CD4-positive, alpha-beta memory T cell (primary cell): ENCODE measurements at regions of chr12 and their contacts with region 1.

Region 1: DNA sequence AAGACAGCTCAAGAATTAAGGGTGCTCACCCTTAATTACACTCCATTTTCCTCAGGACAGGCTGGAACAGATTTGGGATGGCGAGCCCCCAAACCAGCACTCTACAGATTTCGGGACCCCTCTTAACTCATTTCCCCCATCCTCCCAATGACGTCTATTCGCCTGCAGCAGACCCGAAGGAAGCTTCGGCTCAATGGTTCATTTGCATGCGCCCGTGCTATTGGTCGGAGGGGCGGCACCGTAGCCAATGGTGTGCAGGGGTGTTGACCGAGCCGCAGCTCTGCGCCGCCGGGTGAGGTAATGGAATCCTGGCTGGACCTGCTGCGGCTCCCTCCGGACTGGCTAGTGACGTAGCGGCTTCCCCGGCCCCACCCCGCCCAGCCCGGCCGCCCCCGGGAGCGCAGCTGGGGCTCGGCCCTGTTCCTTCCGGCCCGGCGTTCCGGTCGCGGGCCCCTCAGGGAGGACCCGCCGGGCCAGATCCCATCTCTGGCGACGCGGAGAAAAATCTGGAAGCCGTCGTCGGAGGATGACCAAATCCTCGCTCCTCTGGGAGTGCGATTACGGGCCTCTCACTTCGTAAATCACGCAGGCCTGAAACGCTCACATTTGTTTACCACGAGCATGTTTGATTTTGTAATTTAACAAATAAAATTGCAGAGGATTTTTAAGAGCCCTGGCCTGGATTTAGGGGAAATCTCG is 18.3 kb upstream of the NR4A1 start:
- DNase-seq: peak; percentile 81 to 95 (median 85)
- H3K4me3 ChIP-seq: peak overlapping the region; percentile 3 to 36
- H3K4me3 Mint-ChIP-seq: peak overlapping the region; percentile 68 to 87 (median 82)
- H3K27ac ChIP-seq: peak overlapping the region; percentile 54
- H3K27ac Mint-ChIP-seq: peak overlapping the region; percentile 86 to 98 (median 96)
- H3K4me1 ChIP-seq: peaks cover 31% of the 10 kb centered on the region
- H3K4me1 Mint-ChIP-seq: peaks cover 13 to 44% (median 26%) of the 10 kb centered on the region in 4 donors
- H3K27me3 ChIP-seq: no peaks in the 10 kb centered on the region
- H3K27me3 Mint-ChIP-seq: no peaks in the 10 kb centered on the region

Region 2: DNA sequence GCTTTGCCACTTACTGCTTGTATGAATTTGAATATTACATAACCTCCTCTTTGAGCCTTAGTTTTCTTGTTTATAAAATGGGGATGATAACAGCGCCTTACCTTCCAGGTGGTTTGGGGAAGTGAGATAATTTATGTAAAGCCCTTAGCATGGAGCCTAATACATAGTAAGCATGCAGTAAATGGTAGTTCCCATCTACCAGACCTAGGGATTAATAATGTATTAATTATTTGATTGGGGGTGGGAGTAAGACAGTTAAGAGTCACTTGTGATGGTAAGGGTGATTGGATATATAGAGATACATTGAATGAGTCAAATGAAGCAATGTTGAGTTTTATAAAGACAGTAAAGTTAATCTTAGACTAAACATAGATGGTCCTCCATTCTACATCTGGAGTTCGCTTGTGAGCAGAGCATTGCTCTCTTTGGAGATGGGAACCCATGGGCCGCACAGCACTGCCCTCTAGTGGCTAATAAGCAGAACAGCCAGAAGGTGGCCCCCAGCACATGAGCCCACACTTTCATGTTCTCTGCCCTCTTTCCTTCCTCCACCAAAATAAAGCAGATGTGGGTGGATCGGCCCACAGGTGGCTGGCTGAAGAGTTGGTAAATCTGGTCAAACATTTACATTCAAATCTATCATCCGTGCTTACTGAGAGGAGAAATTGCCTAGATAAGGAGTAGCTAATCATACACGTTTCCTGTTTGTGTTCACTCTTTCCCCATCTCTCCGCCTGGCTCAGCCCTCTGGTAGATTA is 52.7 kb before region 1 on chr12:
- CTCF ChIA-PET with region 1: interaction called, 1,048 read pairs
- POLR2A ChIA-PET with region 1: no interaction called
- intact Hi-C with region 1: no loop called
- DNase-seq: peak; percentile 63 to 72 (median 67)
- H3K4me3 ChIP-seq: no peak overlapping the region
- H3K4me3 Mint-ChIP-seq: peak overlapping the region in 1 of 8 donors; percentile 44
- H3K27ac ChIP-seq: no peak overlapping the region
- H3K27ac Mint-ChIP-seq: peak overlapping the region in 6 of 7 donors; percentile 10 to 75 (median 42)
- H3K4me1 ChIP-seq: peaks cover 17% of the 10 kb centered on the region
- H3K4me1 Mint-ChIP-seq: peaks cover 19 to 35% (median 26%) of the 10 kb centered on the region in 4 donors
- H3K27me3 ChIP-seq: no peaks in the 10 kb centered on the region
- H3K27me3 Mint-ChIP-seq: no peaks in the 10 kb centered on the region

Region 3: DNA sequence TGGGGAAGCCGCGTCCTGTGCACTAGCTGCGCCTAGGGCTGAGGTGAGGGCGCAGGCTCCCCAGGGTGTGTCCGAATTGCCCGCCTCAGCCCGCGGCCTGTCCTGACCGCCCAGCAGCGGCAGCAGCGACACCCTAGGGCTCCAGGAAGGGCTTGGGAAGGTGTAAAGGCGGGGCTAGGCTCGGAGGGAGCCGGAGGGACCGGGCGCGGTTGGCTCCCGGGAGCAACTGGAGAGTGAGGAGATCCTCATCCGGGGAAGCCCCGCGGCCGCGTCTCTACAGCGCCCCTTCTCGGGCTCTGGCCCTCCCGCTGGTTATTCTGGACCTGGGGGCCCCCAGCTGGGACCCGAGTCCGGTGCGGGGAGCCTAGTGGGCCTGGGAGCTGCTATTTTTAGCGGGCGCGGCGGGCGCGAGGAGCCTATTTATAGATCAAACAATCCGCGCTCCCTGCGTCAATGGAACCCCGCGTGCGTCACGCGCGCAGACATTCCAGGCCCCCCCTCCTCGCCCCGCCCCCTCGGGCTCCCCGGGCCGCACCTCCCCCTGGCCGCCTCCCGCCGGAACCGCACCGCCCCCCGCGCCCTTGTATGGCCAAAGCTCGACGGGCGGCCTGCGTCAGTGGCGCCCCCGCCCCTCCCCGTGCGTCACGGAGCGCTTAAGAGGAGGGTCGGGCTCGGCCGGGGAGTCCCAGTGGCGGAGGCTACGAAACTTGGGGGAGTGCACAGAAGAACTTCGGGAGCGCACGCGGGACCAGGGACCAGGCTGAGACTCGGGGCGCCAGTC is 18.0 kb after region 1 on chr12 and contains the start of gene NR4A1:
- CTCF ChIA-PET with region 1: interaction called, 8 read pairs
- POLR2A ChIA-PET with region 1: interaction called, 18 read pairs
- intact Hi-C with region 1: loop called (anchors 1 kb)
- DNase-seq: peak; percentile 98 to 99 (median 99)
- H3K4me3 ChIP-seq: peak within 1 kb of the TSS; percentile 84 to 86
- H3K4me3 Mint-ChIP-seq: peak within 1 kb of the TSS; percentile 87 to 96 (median 92)
- H3K27ac ChIP-seq: peak within 1 kb of the TSS; percentile 95
- H3K27ac Mint-ChIP-seq: peak within 1 kb of the TSS; percentile 98 to 100 (median 99)
- H3K4me1 ChIP-seq: peaks cover 33% of the 10 kb centered on the region
- H3K4me1 Mint-ChIP-seq: peaks cover 18 to 45% (median 31%) of the 10 kb centered on the region in 4 donors
- H3K27me3 ChIP-seq: no peaks in the 10 kb centered on the region
- H3K27me3 Mint-ChIP-seq: no peaks in the 10 kb centered on the region
- total RNA-seq, gene NR4A1: 1.1 to 1.3 TPM

Region 4: GRCh38 chr12:52069327-52070184 is 36.6 kb after region 1 on chr12 and contains the start of gene ATG101:
- CTCF ChIA-PET with region 1: interaction called, 289 read pairs
- POLR2A ChIA-PET with region 1: interaction called, 17 read pairs
- intact Hi-C with region 1: loop called (anchors 1 kb)
- DNase-seq: peak; percentile 90 to 92 (median 91)
- H3K4me3 ChIP-seq: peak within 1 kb of the TSS; percentile 92 to 96
- H3K4me3 Mint-ChIP-seq: peak within 1 kb of the TSS; percentile 94 to 100 (median 98)
- H3K27ac ChIP-seq: peak within 1 kb of the TSS; percentile 87
- H3K27ac Mint-ChIP-seq: peak within 1 kb of the TSS; percentile 94 to 100 (median 100)
- H3K4me1 ChIP-seq: peaks cover 42% of the 10 kb centered on the region
- H3K4me1 Mint-ChIP-seq: peaks cover 36 to 48% (median 41%) of the 10 kb centered on the region in 4 donors
- H3K27me3 ChIP-seq: no peaks in the 10 kb centered on the region
- H3K27me3 Mint-ChIP-seq: peaks cover 0 to 2% of the 10 kb centered on the region in 2 donors
- total RNA-seq, gene ATG101: 24.4 to 27.0 TPM

Region 5: GRCh38 chr12:52082988-52083637 is 50.2 kb after region 1 on chr12:
- CTCF ChIA-PET with region 1: interaction called, 434 read pairs
- POLR2A ChIA-PET with region 1: interaction called, 3 read pairs
- intact Hi-C with region 1: no loop called
- DNase-seq: peak; percentile 58 to 71 (median 66)
- H3K4me3 ChIP-seq: no peak overlapping the region
- H3K4me3 Mint-ChIP-seq: peak overlapping the region in 1 of 8 donors; percentile 15
- H3K27ac ChIP-seq: no peak overlapping the region
- H3K27ac Mint-ChIP-seq: peak overlapping the region in 5 of 7 donors; percentile 17 to 79 (median 57)
- H3K4me1 ChIP-seq: peaks cover 8% of the 10 kb centered on the region
- H3K4me1 Mint-ChIP-seq: peaks cover 3 to 11% (median 7%) of the 10 kb centered on the region in 4 donors
- H3K27me3 ChIP-seq: no peaks in the 10 kb centered on the region
- H3K27me3 Mint-ChIP-seq: peaks cover 8 to 13% of the 10 kb centered on the region in 2 donors

Region 6: GRCh38 chr12:52151859-52152783 is 119.2 kb after region 1 on chr12:
- CTCF ChIA-PET with region 1: no interaction called
- POLR2A ChIA-PET with region 1: no interaction called
- intact Hi-C with region 1: no loop called
- DNase-seq: peak; percentile 75 to 83 (median 82)
- H3K4me3 ChIP-seq: no peak overlapping the region
- H3K4me3 Mint-ChIP-seq: peak overlapping the region; percentile 21 to 84 (median 74)
- H3K27ac ChIP-seq: no peak overlapping the region
- H3K27ac Mint-ChIP-seq: peak overlapping the region; percentile 54 to 98 (median 86)
- H3K4me1 ChIP-seq: peaks cover 51% of the 10 kb centered on the region
- H3K4me1 Mint-ChIP-seq: peaks cover 23 to 53% (median 39%) of the 10 kb centered on the region in 4 donors
- H3K27me3 ChIP-seq: no peaks in the 10 kb centered on the region
- H3K27me3 Mint-ChIP-seq: no peaks in the 10 kb centered on the region